BJ (cell line): ENCODE measurements at regions of chr1 and their contacts with region 1.

Region 1: GRCh38 chr1:24586970-24587820 is 31.3 kb downstream of the NCMAP start:
- DNase-seq: no peak
- H3K4me3 ChIP-seq: no peak overlapping the region
- H3K27me3 ChIP-seq: peaks cover 8% of the 10 kb centered on the region
- CTCF ChIP-seq: peak; percentile 76

Region 2: GRCh38 chr1:24564695-24565094 is 22.5 kb before region 1 on chr1:
- CTCF ChIA-PET with region 1: interaction called, 11 read pairs
- POLR2A ChIA-PET with region 1: no interaction called
- DNase-seq: no peak
- H3K4me3 ChIP-seq: no peak overlapping the region
- H3K27me3 ChIP-seq: no peaks in the 10 kb centered on the region; the same call in 1 of the 2 replicates
- CTCF ChIP-seq: no peak

Region 3: DNA sequence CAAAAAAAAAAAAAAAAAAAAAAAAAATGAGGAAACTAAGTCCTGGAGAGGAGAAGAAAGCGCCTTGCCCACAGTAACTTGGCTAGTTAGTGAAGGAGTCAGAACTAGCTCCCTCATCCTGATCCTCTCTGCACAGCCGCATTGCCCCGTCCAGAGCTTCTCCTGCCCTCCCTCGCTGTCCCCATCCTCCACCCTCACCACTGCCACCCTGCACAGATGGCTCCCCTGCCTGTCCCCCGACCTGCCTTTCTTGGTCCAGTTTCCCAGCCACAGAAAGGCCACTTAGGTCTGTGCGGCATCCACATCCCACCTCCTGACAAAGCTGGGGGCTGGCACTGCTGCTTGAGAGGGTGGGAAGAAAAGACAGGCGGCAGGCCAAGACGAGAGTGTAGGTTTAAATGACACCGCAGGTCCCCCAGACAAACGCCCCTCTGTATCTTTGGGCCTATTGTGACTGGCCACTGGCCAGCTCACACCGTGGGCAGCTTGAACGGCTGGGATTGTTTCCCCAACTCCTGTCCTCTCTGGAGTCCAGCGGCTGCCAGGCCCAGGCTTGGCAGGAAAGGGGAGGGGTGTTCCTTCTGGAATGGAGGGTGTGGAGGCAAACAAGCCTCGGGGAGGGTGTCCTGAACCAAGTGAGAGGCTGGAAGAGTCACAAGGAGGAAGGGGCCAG is 11.1 kb before region 1 on chr1:
- CTCF ChIA-PET with region 1: interaction called, 27 read pairs
- POLR2A ChIA-PET with region 1: no interaction called
- DNase-seq: no peak
- H3K4me3 ChIP-seq: no peak overlapping the region
- H3K27me3 ChIP-seq: peaks cover 3% of the 10 kb centered on the region; the same call in 1 of the 2 replicates
- CTCF ChIP-seq: no peak

Region 4: DNA sequence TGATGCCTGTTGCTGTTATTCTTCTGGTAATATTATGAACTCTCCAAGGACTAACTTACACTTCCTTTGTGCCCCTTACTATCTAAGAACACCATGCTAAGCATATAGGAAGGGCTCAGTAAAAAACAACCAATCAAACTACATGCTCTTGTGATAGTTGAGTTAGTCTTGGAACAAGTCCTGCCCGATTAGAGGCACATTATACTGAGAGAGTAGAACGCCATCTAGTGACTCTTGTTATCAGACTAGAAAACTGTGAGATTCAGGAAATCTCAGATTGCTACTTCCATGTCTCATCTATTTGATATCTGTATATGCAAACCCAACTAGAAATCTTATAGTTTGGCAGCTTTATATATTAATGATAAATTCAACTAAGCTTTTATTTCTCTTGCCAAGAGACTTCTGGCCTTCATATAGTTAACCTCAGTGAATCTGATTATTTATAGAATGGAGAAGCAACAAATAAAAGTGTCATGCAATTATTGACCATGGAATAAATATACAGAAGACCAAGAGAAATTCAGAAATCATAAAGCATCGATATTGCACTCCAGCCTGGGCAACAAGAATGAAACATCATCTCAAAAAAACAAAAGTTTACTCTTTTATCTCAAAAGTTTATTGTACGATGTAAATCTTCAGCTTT is 48.1 kb after region 1 on chr1:
- CTCF ChIA-PET with region 1: interaction called, 40 read pairs
- POLR2A ChIA-PET with region 1: no interaction called
- DNase-seq: peak; percentile 26
- H3K4me3 ChIP-seq: no peak overlapping the region
- H3K27me3 ChIP-seq: no peaks in the 10 kb centered on the region
- CTCF ChIP-seq: peak; percentile 73